Activated CD8-positive, alpha-beta T cell treated with anti-CD3 and anti-CD28 coated beads for 36 hours (primary cell): ENCODE measurements at regions of chr10 and their contacts with region 1.

Region 1: GRCh38 chr10:78029269-78030226 is at the start of gene POLR3A:
- DNase-seq: peak; percentile 96
- ATAC-seq: peak; percentile 61
- H3K4me3 Mint-ChIP-seq: peak within 1 kb of the TSS; percentile 100
- H3K27ac Mint-ChIP-seq: peak within 1 kb of the TSS; percentile 97
- H3K4me1 Mint-ChIP-seq: peaks cover 28% of the 10 kb centered on the region
- H3K27me3 Mint-ChIP-seq: no peaks in the 10 kb centered on the region
- CTCF ChIP-seq: peak; percentile 63
- total RNA-seq, gene POLR3A: 16.2 to 17.5 TPM

Region 2: DNA sequence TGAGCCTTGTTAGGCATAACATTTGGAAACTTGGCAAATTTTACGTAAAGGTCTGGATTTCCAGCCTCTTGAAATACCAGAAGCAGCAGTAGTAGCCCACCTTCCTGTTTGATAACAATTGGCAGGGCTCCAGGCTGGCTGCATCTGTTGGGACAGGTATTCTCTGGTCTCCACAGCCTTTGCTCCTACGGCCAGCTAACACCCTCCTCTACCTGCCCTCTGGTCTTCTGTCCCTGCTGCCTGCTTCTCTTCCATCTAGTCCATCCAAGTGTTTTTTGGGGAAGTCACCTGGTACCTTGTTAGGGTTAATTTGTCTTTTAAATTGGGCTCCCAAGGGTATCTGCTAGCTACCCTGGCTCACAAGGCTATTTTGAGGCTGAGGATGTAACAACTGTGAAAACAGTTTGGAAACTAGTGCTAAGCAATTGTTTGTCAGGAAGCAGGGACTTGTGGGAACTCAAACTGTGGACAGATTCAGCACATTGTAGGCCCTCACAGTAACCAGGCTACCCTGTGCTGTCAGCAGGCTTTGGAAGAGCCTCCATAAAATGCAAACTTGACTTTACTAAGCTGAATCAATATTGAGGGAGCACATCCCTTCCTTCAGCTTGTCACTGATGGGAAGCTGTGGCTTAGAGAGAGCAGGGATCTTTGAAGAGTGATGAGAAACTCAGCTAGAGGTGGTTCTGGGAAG is 12.7 kb after region 1 on chr10:
- CTCF ChIA-PET with region 1: interaction called, 13 read pairs
- POLR2A ChIA-PET with region 1: interaction called, 25 read pairs
- intact Hi-C with region 1: no loop called
- DNase-seq: no peak
- ATAC-seq: no peak
- H3K4me3 Mint-ChIP-seq: no peak overlapping the region
- H3K27ac Mint-ChIP-seq: peak overlapping the region; percentile 84
- H3K4me1 Mint-ChIP-seq: peaks cover 64% of the 10 kb centered on the region
- H3K27me3 Mint-ChIP-seq: no peaks in the 10 kb centered on the region
- CTCF ChIP-seq: no peak

Region 3: DNA sequence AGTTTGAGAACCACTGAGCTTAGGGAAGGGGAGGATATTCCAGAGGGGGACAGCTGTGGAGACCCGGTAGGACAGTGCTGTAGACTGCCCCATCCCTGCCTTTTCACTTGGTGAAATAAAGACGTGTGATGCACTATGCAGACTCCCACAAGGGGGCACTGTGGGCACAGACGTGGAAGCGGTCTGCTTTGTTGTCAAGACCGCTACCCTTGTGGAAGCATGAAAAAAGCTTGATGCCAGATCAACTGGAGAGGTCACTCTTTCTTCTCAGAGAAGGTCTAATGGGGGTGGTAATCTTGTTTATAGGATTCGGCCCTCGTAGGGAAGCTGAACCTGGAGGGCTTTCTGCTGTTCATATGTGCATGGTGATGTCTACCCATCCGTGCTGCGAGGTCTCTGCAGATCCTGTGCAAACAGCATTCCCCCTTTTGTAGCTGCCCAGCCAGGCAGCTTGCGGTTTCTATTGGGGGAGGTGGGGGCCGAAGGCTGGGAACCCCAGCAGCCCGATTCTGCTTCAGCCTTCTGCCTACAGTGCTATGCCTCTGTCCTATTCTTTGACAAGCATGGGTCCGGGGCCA is 17.9 kb after region 1 on chr10:
- CTCF ChIA-PET with region 1: interaction called, 13 read pairs
- POLR2A ChIA-PET with region 1: interaction called, 25 read pairs
- intact Hi-C with region 1: no loop called
- DNase-seq: peak; percentile 94
- ATAC-seq: peak; percentile 90
- H3K4me3 Mint-ChIP-seq: no peak overlapping the region
- H3K27ac Mint-ChIP-seq: no peak overlapping the region
- H3K4me1 Mint-ChIP-seq: peaks cover 27% of the 10 kb centered on the region
- H3K27me3 Mint-ChIP-seq: no peaks in the 10 kb centered on the region
- CTCF ChIP-seq: peak; percentile 82

Region 4: GRCh38 chr10:78302989-78303854 is 273.7 kb after region 1 on chr10:
- CTCF ChIA-PET with region 1: no interaction called
- POLR2A ChIA-PET with region 1: interaction called, 3 read pairs
- intact Hi-C with region 1: loop called (anchors 5 kb)
- DNase-seq: peak; percentile 96
- ATAC-seq: peak; percentile 96
- H3K4me3 Mint-ChIP-seq: peak overlapping the region; percentile 74
- H3K27ac Mint-ChIP-seq: peak overlapping the region; percentile 85
- H3K4me1 Mint-ChIP-seq: peaks cover 16% of the 10 kb centered on the region
- H3K27me3 Mint-ChIP-seq: no peaks in the 10 kb centered on the region
- CTCF ChIP-seq: peak; percentile 75

Region 5: GRCh38 chr10:78398382-78398781 is 368.8 kb after region 1 on chr10:
- CTCF ChIA-PET with region 1: no interaction called
- POLR2A ChIA-PET with region 1: no interaction called
- intact Hi-C with region 1: no loop called
- DNase-seq: no peak
- ATAC-seq: no peak
- H3K4me3 Mint-ChIP-seq: no peak overlapping the region
- H3K27ac Mint-ChIP-seq: no peak overlapping the region
- H3K4me1 Mint-ChIP-seq: no peaks in the 10 kb centered on the region
- H3K27me3 Mint-ChIP-seq: no peaks in the 10 kb centered on the region
- CTCF ChIP-seq: no peak